Naive thymus-derived CD4-positive, alpha-beta T cell (primary cell): ENCODE measurements at regions of chr1 and their contacts with region 1.

Region 1: GRCh38 chr1:95043141-95043980 is 29.4 kb downstream of the ALG14 start:
- DNase-seq: peak; percentile 57 to 81 (median 75)
- ATAC-seq: peak; percentile 100
- H3K4me3 ChIP-seq: no peak overlapping the region
- H3K4me3 Mint-ChIP-seq: no peak overlapping the region
- H3K27ac ChIP-seq: no peak overlapping the region
- H3K27ac Mint-ChIP-seq: no peak overlapping the region
- H3K4me1 ChIP-seq: no peaks in the 10 kb centered on the region
- H3K4me1 Mint-ChIP-seq: no peaks in the 10 kb centered on the region
- H3K27me3 ChIP-seq: no peaks in the 10 kb centered on the region
- H3K27me3 Mint-ChIP-seq: no peaks in the 10 kb centered on the region

Region 2: GRCh38 chr1:94425821-94426484 is 617.4 kb before region 1 on chr1:
- CTCF ChIA-PET with region 1: no interaction called
- POLR2A ChIA-PET with region 1: no interaction called
- intact Hi-C with region 1: no loop called
- DNase-seq: no peak
- ATAC-seq: no peak
- H3K4me3 ChIP-seq: no peak overlapping the region
- H3K4me3 Mint-ChIP-seq: peak overlapping the region in 7 of 10 donors; percentile 7 to 47 (median 24)
- H3K27ac ChIP-seq: no peak overlapping the region
- H3K27ac Mint-ChIP-seq: peak overlapping the region in 2 of 9 donors; percentile 10 to 14
- H3K4me1 ChIP-seq: no peaks in the 10 kb centered on the region
- H3K4me1 Mint-ChIP-seq: peaks cover 26 to 86% (median 81%) of the 10 kb centered on the region in 7 donors
- H3K27me3 ChIP-seq: no peaks in the 10 kb centered on the region
- H3K27me3 Mint-ChIP-seq: no peaks in the 10 kb centered on the region

Region 3: DNA sequence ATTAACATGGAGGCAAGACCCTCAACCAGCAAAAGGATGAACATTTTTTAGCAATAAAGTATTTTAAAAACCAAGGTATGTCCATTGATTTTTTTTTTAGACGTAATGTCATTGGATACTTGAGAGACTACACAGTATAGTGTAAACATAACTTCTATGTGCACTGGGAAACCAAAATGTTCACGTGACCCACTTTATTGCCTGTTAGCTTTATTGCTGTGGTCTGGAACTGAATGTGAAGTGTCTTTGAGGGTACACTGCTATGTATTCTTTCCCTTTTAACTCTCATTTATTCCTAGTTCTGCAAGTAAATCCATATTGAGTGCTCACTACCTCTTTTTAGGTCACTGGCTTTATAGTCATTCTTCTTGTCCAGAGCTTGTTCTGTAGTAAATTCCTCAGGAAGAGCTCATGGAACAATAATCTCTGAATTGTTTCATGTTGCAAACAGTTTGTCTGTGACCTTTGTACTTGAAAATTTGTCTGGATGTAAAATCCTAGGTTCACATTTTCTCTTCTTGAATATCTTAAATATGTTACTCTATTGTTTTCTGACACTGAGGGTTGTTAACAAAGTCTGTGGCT is 604.6 kb before region 1 on chr1:
- CTCF ChIA-PET with region 1: no interaction called
- POLR2A ChIA-PET with region 1: no interaction called
- intact Hi-C with region 1: no loop called
- DNase-seq: no peak
- ATAC-seq: no peak
- H3K4me3 ChIP-seq: no peak overlapping the region
- H3K4me3 Mint-ChIP-seq: peak overlapping the region in 3 of 10 donors; percentile 10 to 45 (median 21)
- H3K27ac ChIP-seq: no peak overlapping the region
- H3K27ac Mint-ChIP-seq: no peak overlapping the region
- H3K4me1 ChIP-seq: no peaks in the 10 kb centered on the region
- H3K4me1 Mint-ChIP-seq: peaks cover 0 to 45% (median 33%) of the 10 kb centered on the region in 7 donors
- H3K27me3 ChIP-seq: no peaks in the 10 kb centered on the region
- H3K27me3 Mint-ChIP-seq: no peaks in the 10 kb centered on the region

Region 4: DNA sequence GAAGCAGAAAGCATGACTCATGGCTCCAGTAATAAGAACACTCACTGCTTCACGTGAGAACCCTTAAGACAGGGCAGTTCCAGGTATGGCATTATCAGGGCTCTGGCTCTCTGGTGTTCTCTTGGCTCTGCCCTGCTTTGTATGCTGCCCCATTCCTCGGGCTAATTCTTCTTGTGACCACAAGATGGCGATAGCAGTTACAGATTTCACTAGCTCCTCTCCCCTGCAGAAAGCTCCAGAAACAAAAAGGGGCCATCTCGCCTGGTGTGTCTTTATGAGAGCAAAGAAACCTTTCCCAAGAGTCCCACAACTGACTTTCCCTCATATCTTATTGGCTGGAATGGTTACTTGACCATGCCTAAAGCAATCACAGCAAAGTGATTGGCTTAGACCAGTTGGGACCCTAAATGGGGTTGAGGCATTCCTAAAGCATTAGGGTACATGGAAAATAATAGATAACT is 561.9 kb before region 1 on chr1:
- CTCF ChIA-PET with region 1: interaction called, 3 read pairs
- POLR2A ChIA-PET with region 1: no interaction called
- intact Hi-C with region 1: loop called (anchors 1 to 10 kb)
- DNase-seq: peak in 7 of 9 donors; percentile 5 to 51 (median 33)
- ATAC-seq: peak; percentile 85
- H3K4me3 ChIP-seq: no peak overlapping the region
- H3K4me3 Mint-ChIP-seq: no peak overlapping the region
- H3K27ac ChIP-seq: no peak overlapping the region
- H3K27ac Mint-ChIP-seq: peak overlapping the region in 1 of 9 donors; percentile 55
- H3K4me1 ChIP-seq: no peaks in the 10 kb centered on the region
- H3K4me1 Mint-ChIP-seq: peaks cover 0 to 2% (median 0%) of the 10 kb centered on the region in 7 donors
- H3K27me3 ChIP-seq: no peaks in the 10 kb centered on the region
- H3K27me3 Mint-ChIP-seq: no peaks in the 10 kb centered on the region

Region 5: GRCh38 chr1:94514095-94514727 is 529.1 kb before region 1 on chr1:
- CTCF ChIA-PET with region 1: no interaction called
- POLR2A ChIA-PET with region 1: no interaction called
- intact Hi-C with region 1: loop called in 1 of 2 experiments (anchors 1 kb)
- DNase-seq: no peak
- ATAC-seq: no peak
- H3K4me3 ChIP-seq: no peak overlapping the region
- H3K4me3 Mint-ChIP-seq: no peak overlapping the region
- H3K27ac ChIP-seq: no peak overlapping the region
- H3K27ac Mint-ChIP-seq: no peak overlapping the region
- H3K4me1 ChIP-seq: no peaks in the 10 kb centered on the region
- H3K4me1 Mint-ChIP-seq: no peaks in the 10 kb centered on the region
- H3K27me3 ChIP-seq: no peaks in the 10 kb centered on the region
- H3K27me3 Mint-ChIP-seq: no peaks in the 10 kb centered on the region

Region 6: DNA sequence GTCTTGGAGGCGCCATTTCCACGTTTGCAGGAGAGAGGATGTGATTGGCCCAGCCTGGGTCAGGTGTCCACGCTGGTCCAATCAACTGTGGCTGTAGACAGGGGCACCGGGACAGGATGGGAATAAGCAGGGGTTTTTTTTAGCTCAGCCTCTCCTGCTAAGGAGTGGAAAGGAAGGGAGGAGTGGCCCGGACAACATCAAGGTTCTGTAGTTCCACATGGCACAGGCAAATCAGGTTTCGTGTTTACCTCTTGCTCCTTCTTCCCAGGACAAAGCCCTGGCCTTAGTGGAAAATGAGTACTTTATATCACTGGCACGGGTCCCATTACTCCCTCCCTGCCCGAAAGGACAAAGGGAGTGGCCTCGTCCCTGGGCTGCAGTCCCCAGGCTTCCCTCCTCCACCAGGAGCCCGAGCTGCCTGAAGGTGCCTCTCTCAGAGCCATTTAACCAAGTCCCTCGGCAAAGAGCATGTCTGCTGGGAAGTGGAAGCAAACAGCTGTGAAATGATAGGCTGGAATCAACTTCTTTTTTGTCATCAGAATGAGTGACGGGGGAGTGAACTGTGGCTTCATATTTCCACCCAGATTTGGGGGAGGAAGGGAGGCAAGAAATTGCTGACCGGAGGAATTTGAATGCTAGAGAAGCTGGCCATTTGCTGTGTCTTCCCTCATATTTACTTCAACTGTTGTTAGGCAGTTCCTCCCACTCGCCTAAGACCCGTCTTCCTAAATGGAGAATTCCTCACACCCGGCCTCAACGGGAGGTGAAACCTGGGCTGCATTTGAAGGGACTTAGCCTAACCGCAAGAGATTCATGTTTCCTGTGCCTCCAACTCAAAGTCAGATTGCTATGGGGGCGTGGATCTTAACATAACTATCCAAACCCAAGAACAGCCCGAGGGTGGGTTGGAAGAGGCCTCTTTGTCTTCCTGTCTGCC is 308.1 kb before region 1 on chr1:
- CTCF ChIA-PET with region 1: no interaction called
- POLR2A ChIA-PET with region 1: no interaction called
- intact Hi-C with region 1: no loop called
- DNase-seq: no peak
- ATAC-seq: no peak
- H3K4me3 ChIP-seq: no peak overlapping the region
- H3K4me3 Mint-ChIP-seq: no peak overlapping the region
- H3K27ac ChIP-seq: no peak overlapping the region
- H3K27ac Mint-ChIP-seq: no peak overlapping the region
- H3K4me1 ChIP-seq: no peaks in the 10 kb centered on the region
- H3K4me1 Mint-ChIP-seq: peaks cover 0 to 14% (median 0%) of the 10 kb centered on the region in 7 donors
- H3K27me3 ChIP-seq: no peaks in the 10 kb centered on the region
- H3K27me3 Mint-ChIP-seq: peaks cover 4 to 53% (median 30%) of the 10 kb centered on the region in 5 donors

Region 7: DNA sequence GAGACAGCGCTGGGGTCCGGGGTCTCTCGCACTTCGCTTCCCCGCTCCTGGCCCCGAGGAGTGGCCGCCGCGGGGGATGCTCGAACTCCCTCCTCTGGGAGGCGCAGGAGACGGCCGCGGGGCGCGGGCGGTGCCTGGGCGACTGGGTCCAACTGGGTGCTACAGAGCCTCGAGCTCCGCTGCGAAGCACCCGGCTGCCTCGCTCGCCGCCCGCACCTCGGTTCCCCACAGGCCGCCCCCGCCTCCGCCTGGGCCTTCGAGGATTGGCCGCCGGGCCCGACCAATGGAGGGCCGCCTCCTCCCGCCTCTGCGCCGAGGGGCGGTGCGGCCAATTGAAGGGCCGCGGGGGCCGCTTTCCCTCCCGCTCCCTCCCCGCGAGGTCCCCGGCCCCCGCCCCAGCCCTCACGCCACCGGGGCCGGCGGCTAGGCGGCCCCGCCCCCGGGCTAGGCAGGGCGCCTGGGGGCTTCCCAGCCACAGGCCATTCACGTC is 116.4 kb before region 1 on chr1 and contains the start of gene CNN3:
- CTCF ChIA-PET with region 1: no interaction called
- POLR2A ChIA-PET with region 1: no interaction called
- intact Hi-C with region 1: loop called (anchors 1 to 2 kb)
- DNase-seq: peak; percentile 56 to 78 (median 68)
- ATAC-seq: peak; percentile 91
- H3K4me3 ChIP-seq: peak within 1 kb of the TSS; percentile 39
- H3K4me3 Mint-ChIP-seq: peak within 1 kb of the TSS; percentile 88 to 97 (median 94)
- H3K27ac ChIP-seq: peak within 1 kb of the TSS; percentile 63
- H3K27ac Mint-ChIP-seq: peak within 1 kb of the TSS; percentile 37 to 92 (median 84)
- H3K4me1 ChIP-seq: no peaks in the 10 kb centered on the region
- H3K4me1 Mint-ChIP-seq: peaks cover 12 to 38% (median 34%) of the 10 kb centered on the region in 7 donors
- H3K27me3 ChIP-seq: no peaks in the 10 kb centered on the region
- H3K27me3 Mint-ChIP-seq: peaks cover 18 to 57% (median 26%) of the 10 kb centered on the region in 5 donors
- total RNA-seq, gene CNN3: 4.4 to 14.9 (median 7.4) TPM

Region 8: DNA sequence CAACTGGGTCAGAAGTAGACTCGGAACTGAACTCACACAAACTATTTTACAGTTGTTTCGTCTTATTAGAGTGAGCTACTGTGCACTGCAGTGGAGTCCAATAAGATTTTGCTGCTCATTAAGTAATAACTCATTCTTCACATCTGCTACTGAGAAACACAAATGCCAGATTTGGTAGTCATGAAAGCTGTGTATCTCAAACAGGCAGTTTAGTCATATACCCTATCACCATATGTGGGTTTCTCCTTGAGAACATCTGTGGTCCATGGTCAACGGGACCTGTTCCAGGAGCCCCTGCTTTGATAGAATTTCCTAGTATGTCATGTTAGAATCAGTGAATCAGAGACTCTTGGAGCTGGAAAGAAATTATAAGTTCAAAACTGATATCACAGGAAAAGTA is 31.0 kb before region 1 on chr1:
- CTCF ChIA-PET with region 1: no interaction called
- POLR2A ChIA-PET with region 1: no interaction called
- intact Hi-C with region 1: no loop called
- DNase-seq: no peak
- ATAC-seq: no peak
- H3K4me3 ChIP-seq: no peak overlapping the region
- H3K4me3 Mint-ChIP-seq: no peak overlapping the region
- H3K27ac ChIP-seq: no peak overlapping the region
- H3K27ac Mint-ChIP-seq: no peak overlapping the region
- H3K4me1 ChIP-seq: no peaks in the 10 kb centered on the region
- H3K4me1 Mint-ChIP-seq: peaks cover 0 to 5% (median 0%) of the 10 kb centered on the region in 7 donors
- H3K27me3 ChIP-seq: no peaks in the 10 kb centered on the region
- H3K27me3 Mint-ChIP-seq: peaks cover 0 to 4% (median 0%) of the 10 kb centered on the region in 5 donors